ENCODE measurements at regions of chr5 and their contacts with region 1.

Region 1: DNA sequence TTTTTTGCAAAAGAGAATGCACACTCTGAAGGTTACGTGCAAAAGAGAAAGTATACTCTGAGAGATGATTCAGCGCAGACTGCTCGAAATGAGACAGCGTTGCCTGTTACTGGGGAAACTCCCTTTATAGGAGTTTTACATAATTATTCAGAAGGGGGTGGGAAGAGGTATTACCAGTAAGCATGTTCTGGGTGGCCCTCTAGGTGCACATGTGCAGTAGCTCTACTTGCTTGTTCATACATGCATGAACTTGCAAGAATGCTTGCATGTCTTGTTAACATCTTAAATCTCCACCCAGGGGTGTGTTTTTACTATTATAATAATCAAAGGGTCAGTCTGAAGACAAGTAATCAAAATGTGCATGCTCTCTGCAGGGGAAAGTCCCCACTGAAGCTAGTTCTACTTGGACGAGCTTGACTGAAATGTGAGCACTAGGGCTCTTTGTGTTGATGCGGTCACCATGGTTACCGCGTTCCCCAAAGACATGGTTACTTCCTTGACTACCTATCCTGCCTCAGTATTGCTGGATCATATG is 75.5 kb downstream of the SGCD start:
- DNase-seq: peak; percentile 82
- H3K4me3 Mint-ChIP-seq: peak overlapping the region; percentile 60
- H3K27ac Mint-ChIP-seq: peak overlapping the region; percentile 78
- H3K4me1 Mint-ChIP-seq: peaks cover 8% of the 10 kb centered on the region
- H3K27me3 Mint-ChIP-seq: peaks cover 8% of the 10 kb centered on the region

Region 2: DNA sequence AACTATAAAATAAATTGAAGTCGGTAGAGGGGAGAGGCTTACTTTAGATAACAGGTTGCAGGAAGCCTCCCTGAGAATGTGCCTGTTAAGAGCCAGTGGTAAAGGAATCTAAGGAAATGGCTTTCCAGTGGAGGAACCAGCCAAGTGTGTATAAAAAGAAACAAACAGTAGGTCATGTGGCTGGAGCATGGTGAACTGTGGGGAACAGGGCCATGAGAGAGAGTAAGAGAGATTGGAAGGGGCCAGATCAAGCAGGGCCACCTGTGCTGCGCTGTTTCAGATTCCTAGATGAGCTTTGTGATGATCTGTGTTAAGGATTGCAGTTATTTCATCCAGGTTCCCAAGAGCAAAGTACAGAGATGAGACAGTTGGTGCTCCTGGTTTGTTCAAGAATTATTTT is 228.2 kb before region 1 on chr5:
- intact Hi-C with region 1: no loop called
- DNase-seq: no peak
- H3K4me3 Mint-ChIP-seq: no peak overlapping the region
- H3K27ac Mint-ChIP-seq: no peak overlapping the region
- H3K4me1 Mint-ChIP-seq: no peaks in the 10 kb centered on the region
- H3K27me3 Mint-ChIP-seq: peaks cover 2% of the 10 kb centered on the region

Region 3: GRCh38 chr5:156469636-156470035 is 67.2 kb after region 1 on chr5:
- intact Hi-C with region 1: loop called (anchors 2 kb)
- DNase-seq: no peak
- H3K4me3 Mint-ChIP-seq: no peak overlapping the region
- H3K27ac Mint-ChIP-seq: no peak overlapping the region
- H3K4me1 Mint-ChIP-seq: no peaks in the 10 kb centered on the region
- H3K27me3 Mint-ChIP-seq: no peaks in the 10 kb centered on the region

Measured in activated CD4-positive, alpha-beta T cell treated with anti-CD3 and anti-CD28 coated beads, Interleukin-2, amount 10 ng/mL, durations not matched to agents 24 days and 14 days (primary cell).